Heart left ventricle (tissue), 16 donors: ENCODE measurements at regions of chr6 and their contacts with region 1.

Region 1: DNA sequence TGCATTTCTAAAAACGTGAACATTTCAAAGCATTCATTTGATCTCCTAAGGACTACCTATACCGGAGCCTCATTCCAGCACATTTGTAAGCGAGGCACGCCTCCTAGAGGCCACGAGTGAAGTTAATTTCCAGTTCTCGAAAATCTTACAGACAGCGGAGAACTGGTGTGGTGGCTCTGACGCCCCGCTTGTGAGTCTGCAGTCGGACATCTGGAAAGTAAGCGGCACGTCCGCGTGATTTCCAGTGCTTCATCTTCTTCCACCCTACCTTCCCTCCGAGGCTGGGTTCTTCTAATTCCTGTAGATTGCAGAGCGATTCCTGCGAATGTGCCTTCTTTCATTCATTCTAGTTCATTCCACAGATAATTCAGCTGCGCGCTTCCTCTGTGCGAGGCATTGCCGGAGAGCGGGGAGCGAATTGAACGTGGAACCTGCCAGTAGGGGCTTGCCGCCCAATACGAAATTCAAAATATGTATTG is 810 bp upstream of the PRIM2 start:
- DNase-seq: peak; percentile 77 to 85 (median 81)
- ATAC-seq: peak; percentile 88 to 96 (median 93)
- H3K4me3 ChIP-seq: peak overlapping the region; percentile 57 to 76 (median 69)
- H3K27ac ChIP-seq: peak overlapping the region in 11 of 12 donors; percentile 11 to 74 (median 61)
- H3K4me1 ChIP-seq: peaks cover 0 to 21% (median 9%) of the 10 kb centered on the region in 12 donors
- H3K27me3 ChIP-seq: no peaks in the 10 kb centered on the region
- CTCF ChIP-seq: peak; percentile 70 to 91 (median 79)
- POLR2A ChIP-seq: no peak

Region 2: DNA sequence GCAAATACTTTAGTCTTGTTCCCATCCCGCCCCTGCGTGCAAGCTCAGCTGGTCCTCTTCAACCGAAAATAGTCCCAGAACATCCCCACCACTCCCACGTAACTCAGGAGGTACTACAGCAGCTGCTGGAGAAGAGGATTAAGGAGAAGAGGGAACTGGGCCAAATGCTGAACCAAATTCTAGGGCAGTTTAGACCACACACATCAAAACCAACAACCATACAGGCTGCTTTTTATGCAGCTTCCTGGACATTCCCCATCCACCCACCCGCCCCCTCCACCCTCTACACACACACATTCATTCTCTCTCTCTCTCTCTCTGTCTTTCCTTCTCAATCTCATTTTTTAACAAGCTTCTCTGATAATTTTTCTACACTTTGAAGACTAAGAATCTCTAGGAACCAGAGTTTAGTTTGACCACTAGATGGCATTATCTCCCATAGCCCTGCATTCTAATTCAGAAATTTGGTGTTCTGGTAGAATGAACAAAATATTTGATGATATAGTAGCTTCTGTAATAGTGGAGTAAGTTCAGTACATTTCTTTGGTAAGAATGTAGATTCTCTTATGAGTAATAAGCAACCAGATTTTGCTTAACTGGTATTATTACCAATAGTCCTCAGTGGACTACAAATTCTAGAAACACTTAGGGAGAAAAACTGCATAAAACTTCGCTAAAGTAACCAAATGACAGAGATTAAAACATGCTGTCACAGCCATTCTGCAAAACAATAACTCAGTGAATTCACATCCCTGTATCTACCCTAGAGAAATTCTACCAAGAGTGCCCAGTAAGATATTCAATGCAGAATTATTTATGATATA is 413.8 kb before region 1 on chr6:
- intact Hi-C with region 1: loop called in 7 of 10 experiments (anchors 1 to 5 kb)
- DNase-seq: peak in 3 of 5 donors; percentile 11 to 32 (median 19)
- ATAC-seq: peak in 2 of 4 donors; percentile 58 to 82
- H3K4me3 ChIP-seq: peak overlapping the region in 3 of 12 donors; percentile 11 to 24 (median 16)
- H3K27ac ChIP-seq: peak overlapping the region in 1 of 12 donors; percentile 17
- H3K4me1 ChIP-seq: peaks cover 0 to 7% (median 0%) of the 10 kb centered on the region in 12 donors
- H3K27me3 ChIP-seq: no peaks in the 10 kb centered on the region
- CTCF ChIP-seq: peak; percentile 59 to 81 (median 73)
- POLR2A ChIP-seq: no peak

Region 3: DNA sequence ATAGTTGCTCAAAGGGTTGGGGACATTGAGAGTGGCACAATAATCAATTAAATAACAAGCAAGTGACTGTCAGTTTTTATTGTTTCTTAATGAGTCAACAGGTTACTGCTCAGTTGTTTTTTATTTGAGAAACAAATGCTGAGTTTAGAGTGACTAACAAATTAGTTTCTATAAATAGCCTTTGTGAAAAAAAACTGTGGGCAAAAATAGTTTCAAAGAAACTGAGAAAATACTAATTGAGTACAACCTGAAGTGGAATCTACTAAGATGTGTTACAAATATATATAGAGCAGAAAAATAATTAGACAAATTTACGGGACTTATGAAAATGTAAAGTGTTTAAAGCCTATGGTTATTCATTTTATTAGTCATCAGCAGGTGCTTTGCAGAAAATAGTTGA is 339.4 kb before region 1 on chr6:
- intact Hi-C with region 1: no loop called
- DNase-seq: no peak
- ATAC-seq: no peak
- H3K4me3 ChIP-seq: no peak overlapping the region
- H3K27ac ChIP-seq: no peak overlapping the region
- H3K4me1 ChIP-seq: no peaks in the 10 kb centered on the region
- H3K27me3 ChIP-seq: no peaks in the 10 kb centered on the region
- CTCF ChIP-seq: no peak
- POLR2A ChIP-seq: no peak

Region 4: GRCh38 chr6:57021086-57021720 is 295.4 kb before region 1 on chr6:
- intact Hi-C with region 1: loop called in 3 of 10 experiments (anchors 5 to 10 kb)
- DNase-seq: no peak
- ATAC-seq: peak in 1 of 4 donors; percentile 31
- H3K4me3 ChIP-seq: no peak overlapping the region
- H3K27ac ChIP-seq: no peak overlapping the region
- H3K4me1 ChIP-seq: no peaks in the 10 kb centered on the region
- H3K27me3 ChIP-seq: no peaks in the 10 kb centered on the region
- CTCF ChIP-seq: peak; percentile 35 to 70 (median 54)
- POLR2A ChIP-seq: no peak

Region 5: DNA sequence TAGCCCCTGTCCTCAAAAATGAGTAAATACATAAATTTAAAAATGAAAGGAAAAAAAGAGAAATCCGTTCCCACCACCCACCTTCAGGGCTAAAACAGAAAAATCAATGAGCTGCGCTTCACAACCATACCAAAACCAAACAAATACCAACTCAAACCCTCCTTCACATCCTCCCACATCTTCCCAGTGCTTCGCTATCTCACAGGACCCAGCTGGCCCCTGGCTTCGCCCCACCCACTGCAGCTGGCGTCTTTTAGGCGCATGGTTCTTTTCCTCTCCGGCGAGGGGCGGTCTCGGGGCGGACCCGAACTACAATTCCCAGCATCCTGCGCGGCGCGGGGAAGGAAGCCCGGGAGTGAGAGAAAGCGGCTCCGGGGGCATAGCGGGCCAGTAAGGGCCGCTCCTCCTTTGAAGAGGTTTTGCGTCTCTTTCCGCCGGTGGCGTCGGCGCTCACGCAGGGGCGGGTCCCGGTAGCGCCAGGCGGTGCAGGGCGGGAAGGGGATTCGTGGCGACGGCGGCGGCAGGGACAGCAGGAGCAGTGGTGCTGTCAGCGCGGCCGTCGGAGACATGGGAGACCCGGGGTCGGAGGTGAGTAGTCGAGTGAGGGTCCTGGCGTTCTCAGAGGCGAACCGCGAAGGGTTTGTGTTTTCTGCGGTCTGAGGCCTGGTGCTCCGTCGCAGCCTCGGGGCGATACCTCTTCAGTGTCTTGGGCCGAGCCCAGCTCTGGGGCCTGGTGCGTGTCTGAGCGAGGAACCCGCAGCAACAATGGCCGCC is 226.7 kb before region 1 on chr6 and contains the start of gene ZNF451:
- intact Hi-C with region 1: loop called in 1 of 10 experiments (anchors 5 kb)
- DNase-seq: peak; percentile 98 to 99 (median 99)
- ATAC-seq: peak; percentile 99 to 100 (median 99)
- H3K4me3 ChIP-seq: peak within 1 kb of the TSS; percentile 41 to 79 (median 65)
- H3K27ac ChIP-seq: peak within 1 kb of the TSS; percentile 64 to 90 (median 83)
- H3K4me1 ChIP-seq: peaks cover 3 to 44% (median 30%) of the 10 kb centered on the region in 12 donors
- H3K27me3 ChIP-seq: no peaks in the 10 kb centered on the region
- CTCF ChIP-seq: peak in 2 of 12 donors; percentile 8 to 9
- POLR2A ChIP-seq: peak; percentile 70 to 93
- total RNA-seq, gene ZNF451: 17.7 to 37.1 (median 22.3) TPM

Region 6: DNA sequence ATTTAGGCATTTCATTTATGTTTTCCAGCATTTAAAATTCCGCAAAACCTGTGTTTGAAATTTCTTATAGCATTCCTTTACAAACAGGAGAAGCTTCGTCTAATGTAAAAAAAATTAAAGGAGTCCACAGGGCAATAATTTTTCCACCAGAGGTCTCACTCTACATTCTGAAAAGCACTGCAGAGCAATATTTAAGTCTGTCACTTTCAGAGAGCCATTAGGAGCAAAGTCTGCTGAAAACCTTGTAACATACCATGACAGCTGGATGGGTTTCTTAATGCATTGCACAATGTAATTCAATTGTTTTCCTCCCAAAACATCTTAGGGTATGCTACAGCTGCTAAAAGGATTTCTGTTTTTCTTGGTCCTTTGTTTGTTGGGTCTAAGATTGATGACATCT is 126.5 kb before region 1 on chr6:
- intact Hi-C with region 1: loop called in 5 of 10 experiments (anchors 2 to 10 kb)
- DNase-seq: no peak
- ATAC-seq: no peak
- H3K4me3 ChIP-seq: no peak overlapping the region
- H3K27ac ChIP-seq: no peak overlapping the region
- H3K4me1 ChIP-seq: peaks cover 0 to 6% (median 0%) of the 10 kb centered on the region in 12 donors
- H3K27me3 ChIP-seq: no peaks in the 10 kb centered on the region
- CTCF ChIP-seq: peak in 7 of 12 donors; percentile 21 to 54 (median 37)
- POLR2A ChIP-seq: no peak

Region 7: GRCh38 chr6:57288115-57288514 is 28.5 kb before region 1 on chr6:
- intact Hi-C with region 1: no loop called
- DNase-seq: no peak
- ATAC-seq: no peak
- H3K4me3 ChIP-seq: no peak overlapping the region
- H3K27ac ChIP-seq: no peak overlapping the region
- H3K4me1 ChIP-seq: no peaks in the 10 kb centered on the region
- H3K27me3 ChIP-seq: no peaks in the 10 kb centered on the region
- CTCF ChIP-seq: no peak
- POLR2A ChIP-seq: no peak